HepG2 (cell line): ENCODE measurements at regions of chr19 and their contacts with region 1.

Region 1: DNA sequence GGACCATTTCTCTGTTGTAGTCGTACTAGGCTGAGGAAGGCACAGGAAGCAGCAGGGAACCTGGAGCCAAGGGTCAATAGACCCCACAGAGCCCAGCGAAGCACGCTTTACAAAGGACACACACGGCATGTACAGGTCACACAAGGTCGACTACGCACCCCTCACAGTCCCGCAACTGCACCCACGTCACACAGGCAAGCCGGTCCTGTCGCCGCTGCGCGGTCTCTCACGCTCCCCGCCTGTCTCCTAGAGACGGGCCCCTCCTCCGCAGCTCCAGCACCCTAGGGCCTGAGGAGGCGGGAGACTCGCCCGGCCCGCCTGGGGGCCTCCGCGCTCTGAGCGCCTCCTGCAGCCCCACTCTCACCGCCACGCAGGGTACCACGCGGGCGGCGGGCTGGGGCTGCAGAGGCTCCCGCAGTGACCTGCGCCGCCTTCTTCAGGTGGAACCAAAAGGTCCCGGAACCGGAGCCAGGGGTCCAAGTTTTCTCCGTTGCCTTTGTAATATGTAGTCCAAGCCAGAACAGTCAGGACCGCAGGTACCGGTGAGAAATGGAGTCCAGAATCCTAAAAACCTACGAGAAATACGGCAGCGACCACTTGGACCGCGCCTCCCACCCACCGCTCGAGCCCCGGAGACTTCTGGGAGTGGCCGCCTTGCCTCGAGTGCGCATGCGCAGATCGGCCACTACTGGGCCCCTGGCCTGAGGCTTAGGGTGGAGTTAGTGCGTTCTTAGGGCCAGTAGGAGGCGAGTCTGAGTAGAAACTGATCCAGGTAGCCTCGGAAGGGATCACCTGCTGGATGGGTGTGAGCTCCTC is at the start of gene ZNF607:
- DNase-seq: peak; percentile 91
- ATAC-seq: peak; percentile 95
- H3K4me3 ChIP-seq: peak within 1 kb of the TSS; percentile 75 to 95 (median 92)
- H3K27ac ChIP-seq: peak within 1 kb of the TSS; percentile 89
- H3K4me1 ChIP-seq: peaks cover 9% of the 10 kb centered on the region
- H3K27me3 ChIP-seq: no peaks in the 10 kb centered on the region
- CTCF ChIP-seq: peak; percentile 85
- EP300 ChIP-seq: no peak
- POLR2A ChIP-seq: peak; percentile 74 to 91
- RAD21 ChIP-seq: peak; percentile 10; the same call in 1 of the 2 replicates
- total RNA-seq, gene ZNF607: 8.3 and 11.3 TPM in 2 replicates

Region 2: DNA sequence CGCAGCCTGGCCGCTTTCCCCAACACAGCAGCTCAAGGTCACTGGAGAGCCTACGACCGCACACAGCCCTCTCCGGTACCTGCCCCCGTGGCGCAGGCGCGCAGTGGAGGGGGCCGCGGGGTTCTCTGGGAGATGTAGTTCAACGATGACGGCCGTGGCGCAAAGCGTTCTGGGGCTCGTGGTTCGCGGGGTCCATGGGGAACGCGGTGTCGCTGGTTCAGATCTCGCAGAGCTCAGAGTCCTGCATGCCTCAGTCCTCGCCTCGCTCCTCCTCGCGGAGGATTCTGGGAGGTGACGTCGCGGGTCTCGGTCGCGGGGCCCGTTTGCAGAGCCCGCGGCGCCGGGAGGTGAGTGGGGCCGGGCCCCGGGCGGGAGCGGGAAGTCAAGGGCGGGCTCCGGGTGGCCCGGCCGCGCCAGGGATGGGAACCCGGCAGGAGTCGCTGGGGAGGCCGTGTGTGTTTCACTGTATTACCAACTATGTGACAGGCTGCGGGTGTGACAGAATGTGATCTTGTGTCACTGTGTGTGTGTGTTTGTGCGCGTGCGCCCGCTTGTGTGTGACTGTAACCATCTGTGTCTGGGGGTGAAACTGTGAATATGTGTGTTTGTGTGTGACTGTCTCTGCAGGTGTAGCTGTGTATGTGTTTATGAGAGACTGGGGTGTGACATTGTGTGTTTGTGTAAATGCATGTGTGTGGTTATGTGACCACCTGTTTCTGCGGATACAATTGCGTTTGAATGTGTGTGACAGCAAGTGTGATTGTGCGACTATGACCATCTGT is 348.2 kb before region 1 on chr19 and contains the start of gene ZNF527:
- CTCF ChIA-PET with region 1: no interaction called
- POLR2A ChIA-PET with region 1: no interaction called
- in situ Hi-C with region 1: no loop called
- intact Hi-C with region 1: loop called (anchors 5 kb)
- DNase-seq: peak; percentile 96
- ATAC-seq: peak; percentile 98
- H3K4me3 ChIP-seq: peak within 1 kb of the TSS; percentile 58 to 86 (median 80)
- H3K27ac ChIP-seq: peak within 1 kb of the TSS; percentile 67
- H3K4me1 ChIP-seq: peaks cover 8% of the 10 kb centered on the region
- H3K27me3 ChIP-seq: no peaks in the 10 kb centered on the region; a peak in 1 of 5 replicates
- CTCF ChIP-seq: peak; percentile 24; the same call in 1 of the 2 replicates
- EP300 ChIP-seq: peak in 1 of 2 experiments; percentile 26; a peak in 1 of 4 replicates
- POLR2A ChIP-seq: peak in 1 of 2 experiments; percentile 85
- RAD21 ChIP-seq: peak; percentile 47; the same call in 1 of the 2 replicates
- total RNA-seq, gene ZNF527: 3.5 and 4.2 TPM in 2 replicates

Region 3: GRCh38 chr19:37699127-37699526 is 20.2 kb before region 1 on chr19:
- CTCF ChIA-PET with region 1: no interaction called
- POLR2A ChIA-PET with region 1: no interaction called
- in situ Hi-C with region 1: no loop called
- intact Hi-C with region 1: no loop called
- DNase-seq: peak; percentile 10
- ATAC-seq: no peak
- H3K4me3 ChIP-seq: no peak overlapping the region
- H3K27ac ChIP-seq: no peak overlapping the region
- H3K4me1 ChIP-seq: no peaks in the 10 kb centered on the region
- H3K27me3 ChIP-seq: no peaks in the 10 kb centered on the region
- CTCF ChIP-seq: no peak
- EP300 ChIP-seq: no peak
- POLR2A ChIP-seq: no peak
- RAD21 ChIP-seq: no peak

Region 4: DNA sequence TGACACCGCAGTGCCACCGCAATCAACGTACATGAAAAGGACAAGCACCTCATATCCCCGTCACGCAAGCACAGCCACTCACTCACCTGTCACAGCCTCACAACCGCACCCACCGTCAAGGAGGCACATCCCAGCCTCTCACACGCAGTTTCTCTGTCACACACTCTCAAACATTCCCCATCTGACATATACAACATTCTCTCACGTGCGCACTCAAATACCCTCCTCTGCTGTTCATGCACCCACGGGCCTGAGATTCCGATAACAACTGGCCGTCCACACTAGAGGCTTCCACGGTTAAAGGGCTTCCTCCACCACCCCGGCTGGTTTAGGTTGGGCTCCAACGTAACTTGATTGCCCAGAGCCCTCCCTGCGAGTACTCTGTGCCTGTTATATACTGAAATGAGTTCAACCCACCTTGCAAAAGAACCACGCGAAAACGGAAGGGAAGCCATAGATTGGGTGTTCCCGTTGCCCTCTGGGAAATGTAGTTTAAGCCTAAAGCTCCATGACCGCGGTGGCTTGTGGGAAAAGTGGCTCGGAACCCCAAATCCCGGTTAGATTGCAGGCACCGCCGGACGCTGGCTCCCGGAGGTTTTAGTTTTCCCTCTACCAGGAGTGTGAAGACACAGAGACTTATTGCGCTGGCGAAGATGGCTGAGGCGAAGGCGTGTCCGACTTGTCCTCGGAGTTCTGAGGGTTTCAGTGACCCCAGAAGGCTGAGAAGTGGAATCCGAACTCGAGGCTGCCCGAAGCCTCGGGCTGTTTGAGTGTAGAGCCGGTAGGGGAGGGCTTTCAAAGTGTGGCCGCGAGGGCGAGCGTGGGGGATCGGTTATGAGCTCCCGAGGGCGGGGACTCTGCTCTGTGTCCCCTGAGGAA is 60.0 kb after region 1 on chr19 and contains the start of gene ZNF573:
- CTCF ChIA-PET with region 1: no interaction called
- POLR2A ChIA-PET with region 1: interaction called, 8 read pairs
- in situ Hi-C with region 1: no loop called
- intact Hi-C with region 1: loop called (anchors 1 kb)
- DNase-seq: peak; percentile 88
- ATAC-seq: peak; percentile 96
- H3K4me3 ChIP-seq: peak within 1 kb of the TSS; percentile 94 to 96 (median 96)
- H3K27ac ChIP-seq: peak within 1 kb of the TSS; percentile 86
- H3K4me1 ChIP-seq: no peaks in the 10 kb centered on the region
- H3K27me3 ChIP-seq: no peaks in the 10 kb centered on the region; a peak in 1 of 5 replicates
- CTCF ChIP-seq: no peak
- EP300 ChIP-seq: peak in 1 of 2 experiments; percentile 11; a peak in 1 of 4 replicates
- POLR2A ChIP-seq: peak; percentile 69 to 84
- RAD21 ChIP-seq: no peak
- total RNA-seq, gene ZNF573: 9.3 and 16.0 TPM in 2 replicates

Region 5: DNA sequence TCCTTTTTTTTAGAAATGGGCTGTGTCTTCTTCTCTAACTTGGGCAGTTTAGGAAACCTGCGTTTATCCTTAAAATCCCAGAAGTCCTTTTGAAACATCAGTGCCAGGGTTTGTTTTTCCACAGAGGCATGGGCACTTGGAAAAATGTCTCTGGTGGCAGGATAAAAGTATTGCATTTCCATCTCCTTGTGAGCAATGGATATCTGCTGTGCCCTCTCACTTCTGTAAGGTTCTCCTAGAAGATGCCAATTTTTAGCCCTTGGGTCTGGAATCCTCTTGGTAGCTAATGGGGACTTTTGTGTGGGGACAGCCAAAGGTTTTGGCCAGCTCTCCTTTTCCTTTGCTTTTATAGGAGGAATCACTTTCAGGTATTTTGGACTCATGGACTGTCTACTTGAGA is 166.1 kb after region 1 on chr19:
- CTCF ChIA-PET with region 1: no interaction called
- POLR2A ChIA-PET with region 1: no interaction called
- in situ Hi-C with region 1: no loop called
- intact Hi-C with region 1: no loop called
- DNase-seq: no peak
- ATAC-seq: no peak
- H3K4me3 ChIP-seq: no peak overlapping the region
- H3K27ac ChIP-seq: no peak overlapping the region
- H3K4me1 ChIP-seq: no peaks in the 10 kb centered on the region
- H3K27me3 ChIP-seq: peaks cover 0 to 42% of the 10 kb centered on the region in 2 experiments; a peak in 2 of 5 replicates
- CTCF ChIP-seq: no peak
- EP300 ChIP-seq: no peak
- POLR2A ChIP-seq: no peak
- RAD21 ChIP-seq: no peak